ENCODE measurements at regions of chr7 and their contacts with region 1.

Region 1: DNA sequence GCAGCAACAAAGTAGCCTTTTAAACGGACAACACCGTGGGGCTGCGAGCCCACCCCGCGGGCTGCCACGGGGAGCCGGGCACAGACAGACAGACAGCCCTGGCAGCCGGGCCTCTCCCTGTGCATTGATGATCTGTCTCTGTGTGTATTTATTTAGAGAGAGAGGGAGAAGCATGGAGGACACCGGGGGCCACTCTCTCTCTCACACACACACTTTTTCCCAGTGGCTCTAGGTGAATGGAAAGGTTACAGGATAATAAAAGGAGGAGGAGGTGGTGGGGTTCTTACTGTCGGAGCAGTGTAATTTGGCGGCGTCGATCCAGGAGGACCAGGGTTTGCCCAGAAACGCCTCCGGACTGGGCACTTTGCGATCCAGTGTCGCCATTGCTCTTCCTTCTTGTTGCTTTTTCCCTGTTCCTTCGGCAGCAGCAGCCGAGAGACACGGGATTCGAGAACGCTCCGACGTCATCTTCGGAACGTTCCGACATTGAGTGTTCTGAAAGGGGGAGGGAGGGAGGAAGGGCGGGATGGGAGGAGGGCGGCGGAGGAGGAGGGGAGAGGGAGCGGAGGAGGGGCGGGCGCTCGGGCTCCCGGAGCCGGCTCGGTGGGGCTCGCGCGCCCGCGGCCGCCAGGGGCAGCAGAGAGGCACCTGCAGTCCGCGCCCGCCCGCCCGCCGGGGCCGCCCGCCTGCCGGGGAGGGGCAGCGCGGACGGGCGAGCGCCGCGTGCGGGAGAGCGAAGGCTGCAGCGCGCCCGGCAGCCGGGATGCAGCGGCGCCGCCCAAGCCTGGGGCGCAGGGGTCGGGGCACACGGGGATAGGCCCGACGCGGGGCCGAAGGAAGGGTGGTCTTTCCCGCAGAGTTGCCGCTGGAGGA is at the start of gene ATXN7L1:
- DNase-seq: peak; percentile 89
- ATAC-seq: peak; percentile 99
- H3K4me3 Mint-ChIP-seq: peak within 1 kb of the TSS; percentile 94
- H3K27ac Mint-ChIP-seq: peak within 1 kb of the TSS; percentile 67
- H3K4me1 Mint-ChIP-seq: peaks cover 23% of the 10 kb centered on the region
- H3K27me3 Mint-ChIP-seq: no peaks in the 10 kb centered on the region
- CTCF ChIP-seq: no peak
- total RNA-seq, gene ATXN7L1: 14.4 and 18.6 TPM in 2 replicates

Region 2: DNA sequence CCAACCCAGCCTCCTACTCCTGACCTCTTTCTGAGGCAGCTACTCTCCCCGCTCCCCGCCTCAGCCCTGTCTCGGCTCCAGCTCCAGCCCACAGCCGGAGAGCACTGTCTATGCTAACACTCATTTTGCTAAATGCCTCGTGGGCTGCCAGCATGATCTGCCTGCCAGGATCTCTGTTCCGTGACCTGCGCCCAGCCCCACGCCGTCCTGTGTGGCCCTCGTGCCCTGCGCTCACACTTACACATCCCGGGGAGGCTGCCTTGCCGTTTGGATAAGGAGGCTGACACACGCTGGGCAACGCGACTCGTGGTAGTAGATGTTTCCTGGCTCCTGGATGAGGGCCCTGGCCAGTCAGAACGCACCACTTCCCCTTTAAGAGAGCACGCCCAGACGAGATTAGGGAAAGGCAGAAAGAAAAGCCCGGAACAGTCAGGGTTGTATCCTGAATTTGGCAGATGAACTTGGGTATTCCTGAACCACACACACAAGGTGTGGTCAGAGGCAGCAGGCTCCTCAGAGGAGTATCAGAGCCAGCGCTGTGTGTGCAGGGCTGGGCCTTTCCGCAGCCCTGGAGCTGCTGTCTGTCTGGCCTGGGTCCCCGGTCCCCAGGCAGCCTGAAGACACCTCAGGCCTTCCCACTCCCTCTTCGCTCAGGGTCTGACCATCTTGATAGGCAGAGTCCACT is 197.4 kb before region 1 on chr7:
- CTCF ChIA-PET with region 1: no interaction called
- POLR2A ChIA-PET with region 1: no interaction called
- intact Hi-C with region 1: loop called (anchors 1 kb)
- DNase-seq: peak; percentile 42
- ATAC-seq: peak; percentile 62
- H3K4me3 Mint-ChIP-seq: peak overlapping the region; percentile 94
- H3K27ac Mint-ChIP-seq: peak overlapping the region; percentile 89
- H3K4me1 Mint-ChIP-seq: peaks cover 57% of the 10 kb centered on the region
- H3K27me3 Mint-ChIP-seq: no peaks in the 10 kb centered on the region
- CTCF ChIP-seq: no peak

Region 3: GRCh38 chr7:105759670-105760550 is 116.4 kb before region 1 on chr7:
- CTCF ChIA-PET with region 1: interaction called, 18 read pairs
- POLR2A ChIA-PET with region 1: no interaction called
- intact Hi-C with region 1: loop called (anchors 1 kb)
- DNase-seq: no peak
- ATAC-seq: no peak
- H3K4me3 Mint-ChIP-seq: no peak overlapping the region
- H3K27ac Mint-ChIP-seq: no peak overlapping the region
- H3K4me1 Mint-ChIP-seq: peaks cover 1% of the 10 kb centered on the region
- H3K27me3 Mint-ChIP-seq: no peaks in the 10 kb centered on the region
- CTCF ChIP-seq: peak; percentile 67

Region 4: GRCh38 chr7:105808703-105809590 is 67.4 kb before region 1 on chr7:
- CTCF ChIA-PET with region 1: no interaction called
- POLR2A ChIA-PET with region 1: interaction called, 4 read pairs
- intact Hi-C with region 1: loop called (anchors 1 kb)
- DNase-seq: peak; percentile 60
- ATAC-seq: peak; percentile 95
- H3K4me3 Mint-ChIP-seq: peak overlapping the region; percentile 66
- H3K27ac Mint-ChIP-seq: peak overlapping the region; percentile 87
- H3K4me1 Mint-ChIP-seq: peaks cover 46% of the 10 kb centered on the region
- H3K27me3 Mint-ChIP-seq: no peaks in the 10 kb centered on the region
- CTCF ChIP-seq: no peak

Region 5: DNA sequence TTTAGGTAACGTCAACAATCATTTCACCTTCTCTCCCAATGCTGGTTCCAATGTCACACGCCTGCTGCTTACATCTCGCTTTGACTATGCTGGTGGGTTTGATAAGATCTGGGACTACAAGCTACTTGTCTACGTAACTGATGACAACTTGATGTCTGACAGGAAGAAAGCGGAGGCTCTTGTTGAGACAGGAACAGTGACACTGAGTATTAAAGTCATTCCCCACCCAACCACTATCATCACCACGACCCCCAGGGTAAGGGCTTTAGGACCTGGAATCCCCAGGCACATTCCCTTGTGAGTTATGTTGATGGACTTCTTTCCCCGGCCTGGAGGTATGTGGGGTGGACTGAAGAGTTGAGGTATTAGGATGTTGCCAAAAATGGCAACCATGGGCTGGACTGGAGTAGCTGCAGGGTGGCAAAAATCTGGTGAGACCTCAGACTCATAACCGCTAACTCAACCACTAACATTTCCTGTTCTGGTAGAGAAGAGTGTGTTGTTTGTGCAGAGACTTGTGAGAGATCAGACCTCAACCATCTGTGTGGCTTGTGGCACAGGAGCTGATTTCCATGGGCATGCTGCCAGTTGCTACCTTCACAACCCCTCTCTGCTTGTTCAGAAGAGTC is 146.0 kb after region 1 on chr7:
- CTCF ChIA-PET with region 1: no interaction called
- POLR2A ChIA-PET with region 1: no interaction called
- intact Hi-C with region 1: loop called (anchors 5 kb)
- DNase-seq: no peak
- ATAC-seq: peak; percentile 65
- H3K4me3 Mint-ChIP-seq: peak overlapping the region; percentile 42
- H3K27ac Mint-ChIP-seq: peak overlapping the region; percentile 50
- H3K4me1 Mint-ChIP-seq: peaks cover 61% of the 10 kb centered on the region
- H3K27me3 Mint-ChIP-seq: no peaks in the 10 kb centered on the region
- CTCF ChIP-seq: no peak

Region 6: DNA sequence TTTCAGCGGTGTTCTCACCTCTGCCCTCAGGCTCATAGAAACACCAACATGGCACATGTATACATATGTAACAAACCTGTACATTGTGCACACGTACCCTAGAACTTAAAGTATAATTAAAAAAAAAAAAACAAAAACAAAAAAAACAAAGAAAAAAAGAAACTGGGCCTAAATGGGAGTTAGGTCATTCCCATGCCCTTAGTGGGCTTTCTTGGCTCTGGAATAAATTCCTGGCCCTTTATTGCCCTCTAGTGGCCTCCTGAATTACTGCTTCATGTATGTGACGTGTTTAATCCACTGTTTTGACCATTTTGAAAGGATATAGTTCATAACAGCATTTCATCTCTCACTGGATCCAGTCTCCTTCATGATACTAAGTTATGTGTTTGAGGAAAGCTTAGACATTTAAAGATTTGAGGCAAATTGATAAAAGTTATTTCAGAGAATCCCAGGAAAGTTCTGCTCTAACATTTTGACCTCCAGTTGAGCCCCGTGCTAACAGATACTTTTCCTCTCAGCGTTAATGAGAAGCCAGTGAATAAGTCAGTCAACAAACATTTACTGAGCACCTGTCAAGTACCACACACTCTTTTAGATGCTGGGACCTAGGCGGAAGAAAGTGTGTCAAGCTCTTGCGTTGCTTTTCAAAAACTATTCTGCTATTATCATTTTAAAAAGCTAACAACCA is 290.5 kb after region 1 on chr7:
- CTCF ChIA-PET with region 1: no interaction called
- POLR2A ChIA-PET with region 1: no interaction called
- intact Hi-C with region 1: loop called (anchors 5 kb)
- DNase-seq: no peak
- ATAC-seq: peak; percentile 54
- H3K4me3 Mint-ChIP-seq: no peak overlapping the region
- H3K27ac Mint-ChIP-seq: no peak overlapping the region
- H3K4me1 Mint-ChIP-seq: peaks cover 10% of the 10 kb centered on the region
- H3K27me3 Mint-ChIP-seq: peaks cover 2% of the 10 kb centered on the region
- CTCF ChIP-seq: peak; percentile 77